Breast epithelium (tissue), 4 donors: ENCODE measurements at regions of chr3 and their contacts with region 1.

Region 1: DNA sequence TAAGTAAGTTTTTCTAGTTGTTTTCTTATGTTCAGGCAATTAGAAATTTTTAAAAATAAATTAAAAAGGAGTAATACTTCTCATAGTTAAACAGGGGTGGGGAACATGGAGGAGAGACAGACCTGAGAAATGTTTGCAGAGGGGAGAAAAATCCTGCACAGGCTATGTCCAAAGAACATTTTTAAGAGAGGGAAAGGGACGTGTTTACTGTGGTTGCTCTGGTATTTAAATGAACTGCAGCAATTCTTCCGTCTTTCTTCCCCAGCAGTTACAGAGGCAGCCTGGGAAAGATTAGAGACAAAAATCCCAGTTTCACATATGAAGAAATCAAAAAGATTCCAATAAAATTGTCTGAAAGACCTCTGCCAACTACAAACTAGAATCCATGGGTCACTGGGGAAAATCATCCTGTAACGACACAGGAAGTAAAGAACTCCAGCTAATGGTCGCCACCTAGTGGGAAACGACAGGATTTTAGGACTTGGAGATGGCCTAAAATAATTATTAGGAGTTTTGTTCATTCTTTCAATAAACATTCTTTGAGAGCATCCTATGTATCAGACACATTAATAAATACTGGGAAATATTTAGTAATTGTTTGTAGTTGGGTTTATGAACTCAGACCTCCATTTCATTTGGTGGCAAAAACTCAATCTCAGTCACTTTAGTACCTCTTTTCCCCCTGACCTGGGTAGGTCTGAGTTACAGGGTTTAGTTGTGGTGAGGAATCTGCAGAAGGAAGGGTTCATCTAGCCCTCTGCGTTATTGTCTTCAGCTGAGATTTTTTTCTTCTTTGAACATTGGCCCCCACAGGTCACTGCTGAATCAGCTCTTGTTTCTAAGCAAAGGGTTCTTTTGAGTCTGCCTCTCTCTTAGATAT is 69.9 kb upstream of the GOLIM4 start:
- DNase-seq: peak in 1 of 2 donors; percentile 46
- H3K4me3 ChIP-seq: no peak overlapping the region
- H3K27ac ChIP-seq: peak overlapping the region in 1 of 2 donors; percentile 33
- H3K4me1 ChIP-seq: no peaks in the 10 kb centered on the region
- H3K27me3 ChIP-seq: no peaks in the 10 kb centered on the region
- CTCF ChIP-seq: peak; percentile 79 to 83 (median 80)
- POLR2A ChIP-seq: no peak

Region 2: DNA sequence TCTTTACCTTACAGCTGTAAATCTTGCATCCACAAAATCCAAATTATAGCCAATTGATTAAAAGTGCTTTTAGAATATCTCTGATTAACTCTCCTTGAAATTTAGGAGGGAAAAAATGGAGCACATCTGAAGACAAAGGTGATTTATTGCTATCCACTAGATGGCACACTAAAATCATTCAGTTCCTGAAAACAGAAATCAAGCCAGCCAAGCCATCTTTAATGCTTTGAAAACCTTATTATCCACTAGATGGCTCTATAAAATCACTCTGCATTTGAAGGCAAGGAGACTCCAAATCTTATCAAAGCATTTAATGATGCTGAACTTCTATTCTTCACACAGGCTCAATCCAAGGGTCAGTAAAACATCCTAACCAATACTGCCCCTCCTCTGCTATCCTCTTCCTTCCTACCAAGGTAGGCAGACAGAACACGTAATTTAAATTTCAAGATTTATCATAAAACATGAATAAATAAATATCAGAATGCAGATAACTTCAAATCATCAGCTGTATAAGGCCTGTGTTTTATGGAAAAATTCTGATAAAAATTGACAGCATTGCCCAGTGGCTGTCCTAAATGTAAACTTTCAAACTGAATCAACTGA is 118.3 kb before region 1 on chr3:
- intact Hi-C with region 1: loop called (anchors 5 kb)
- DNase-seq: no peak
- H3K4me3 ChIP-seq: no peak overlapping the region
- H3K27ac ChIP-seq: no peak overlapping the region
- H3K4me1 ChIP-seq: no peaks in the 10 kb centered on the region
- H3K27me3 ChIP-seq: no peaks in the 10 kb centered on the region
- CTCF ChIP-seq: peak; percentile 68 to 91 (median 83)
- POLR2A ChIP-seq: no peak